Activated naive CD4-positive, alpha-beta T cell treated with anti-CD3 and anti-CD28 coated beads for 36 hours (primary cell): ENCODE measurements at regions of chr17 and their contacts with region 1.

Region 1: GRCh38 chr17:66397486-66397885 is 95.1 kb downstream of the PRKCA start:
- DNase-seq: peak; percentile 59
- H3K4me3 Mint-ChIP-seq: no peak overlapping the region
- H3K27ac Mint-ChIP-seq: peak overlapping the region; percentile 55
- H3K4me1 Mint-ChIP-seq: peaks cover 81% of the 10 kb centered on the region
- H3K27me3 Mint-ChIP-seq: no peaks in the 10 kb centered on the region

Region 2: DNA sequence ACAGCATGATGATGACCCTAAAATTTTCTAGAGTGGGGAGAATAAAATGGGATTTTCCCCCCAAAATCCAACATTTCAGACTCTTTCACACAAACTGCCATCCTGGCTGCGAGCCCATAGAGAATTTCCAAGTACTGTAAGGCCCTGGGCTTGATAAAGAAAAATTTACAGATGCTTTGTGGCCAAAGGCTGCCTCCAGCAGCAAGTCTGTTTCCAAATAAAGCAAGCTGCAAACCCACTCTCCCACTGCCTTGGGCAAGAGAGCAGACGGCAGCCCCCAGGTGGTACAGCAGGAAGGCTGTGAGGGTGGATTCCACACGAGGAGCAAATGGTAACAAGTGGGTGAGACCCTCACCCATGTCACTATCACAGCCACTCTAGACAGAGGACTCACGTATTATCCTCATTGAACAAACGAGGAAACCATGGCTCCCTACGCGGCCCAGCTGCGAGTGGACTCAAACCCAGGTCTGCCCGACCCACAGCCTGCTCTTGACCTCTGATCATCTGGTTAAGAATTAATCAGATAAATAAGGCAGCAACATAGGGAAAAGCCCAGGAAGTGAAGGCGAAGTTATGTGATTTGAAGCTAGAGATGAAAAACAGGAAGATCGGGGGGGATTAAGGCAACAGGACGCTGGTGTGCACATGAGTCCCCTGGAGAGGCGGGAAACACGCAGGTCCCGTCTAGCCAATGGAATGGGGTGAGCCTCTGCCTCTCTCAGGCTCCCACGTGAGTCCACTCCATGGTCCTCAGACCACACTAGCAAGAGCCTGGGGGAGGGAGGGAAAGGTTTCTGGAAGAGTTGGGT is 873.4 kb before region 1 on chr17:
- CTCF ChIA-PET with region 1: no interaction called
- intact Hi-C with region 1: loop called (anchors 5 kb)
- DNase-seq: no peak
- H3K4me3 Mint-ChIP-seq: no peak overlapping the region
- H3K27ac Mint-ChIP-seq: peak overlapping the region; percentile 24
- H3K4me1 Mint-ChIP-seq: peaks cover 29% of the 10 kb centered on the region
- H3K27me3 Mint-ChIP-seq: no peaks in the 10 kb centered on the region

Region 3: DNA sequence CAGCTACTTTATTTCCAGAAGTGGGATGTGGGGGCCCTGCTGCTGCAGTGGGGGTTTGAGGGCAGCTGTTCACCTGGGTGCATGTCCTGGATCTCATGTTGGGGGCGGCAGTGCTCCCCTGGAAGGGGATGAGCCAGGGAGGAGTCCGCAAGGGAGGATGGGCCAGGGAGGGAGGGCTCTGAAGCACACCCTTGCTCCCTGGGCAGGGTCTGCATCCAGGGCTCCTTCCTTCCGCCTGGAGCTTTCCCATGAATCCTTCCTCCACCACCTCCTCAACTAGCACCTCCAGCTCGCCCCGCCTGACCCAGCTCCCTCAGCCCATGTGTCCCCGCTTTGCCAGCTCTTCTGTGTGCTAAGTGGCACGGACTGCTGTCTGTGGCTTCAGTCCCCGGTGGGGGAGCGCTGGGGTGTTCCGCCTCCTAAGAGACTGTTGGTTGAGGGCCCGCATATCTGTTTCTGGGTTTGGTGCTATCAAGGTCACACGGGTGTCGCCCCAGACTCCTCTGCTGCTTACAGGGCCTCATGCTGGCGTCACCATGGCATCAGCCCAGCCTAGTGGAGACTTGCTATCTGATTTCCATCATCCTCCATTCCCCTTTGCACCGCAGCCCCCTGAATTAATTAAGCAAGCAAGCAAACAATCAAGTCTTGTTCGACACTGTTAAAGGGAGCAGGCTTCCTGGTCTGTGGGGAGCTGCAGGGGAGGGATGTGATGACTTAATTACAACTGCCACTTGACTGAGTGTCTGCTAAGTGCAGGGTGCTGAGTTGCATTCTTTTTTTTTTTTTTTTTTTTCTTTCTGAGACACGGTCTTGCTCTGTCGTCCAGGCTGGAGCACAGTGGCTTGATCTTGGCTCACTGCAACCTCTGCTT is 23.3 kb before region 1 on chr17:
- CTCF ChIA-PET with region 1: interaction called, 3 read pairs
- intact Hi-C with region 1: loop called (anchors 2 kb)
- DNase-seq: peak; percentile 47
- H3K4me3 Mint-ChIP-seq: peak overlapping the region; percentile 4
- H3K27ac Mint-ChIP-seq: peak overlapping the region; percentile 39
- H3K4me1 Mint-ChIP-seq: peaks cover 73% of the 10 kb centered on the region
- H3K27me3 Mint-ChIP-seq: no peaks in the 10 kb centered on the region

Region 4: GRCh38 chr17:66383333-66383732 is 14.2 kb before region 1 on chr17:
- CTCF ChIA-PET with region 1: interaction called, 7 read pairs
- intact Hi-C with region 1: loop called (anchors 2 kb)
- DNase-seq: no peak
- H3K4me3 Mint-ChIP-seq: no peak overlapping the region
- H3K27ac Mint-ChIP-seq: peak overlapping the region; percentile 33
- H3K4me1 Mint-ChIP-seq: peaks cover 76% of the 10 kb centered on the region
- H3K27me3 Mint-ChIP-seq: no peaks in the 10 kb centered on the region